Dorsolateral prefrontal cortex (tissue), 120 donors: ENCODE measurements at regions of chr13 and their contacts with region 1.

Region 1: GRCh38 chr13:24091080-24091479 is 69.4 kb upstream of the SPATA13 start:
- DNase-seq: no peak
- H3K4me3 ChIP-seq: no peak overlapping the region
- H3K27ac ChIP-seq: peak overlapping the region in 2 of 59 donors; percentile 5 to 33
- H3K27me3 ChIP-seq: no peaks in the 10 kb centered on the region
- CTCF ChIP-seq: no peak

Region 2: DNA sequence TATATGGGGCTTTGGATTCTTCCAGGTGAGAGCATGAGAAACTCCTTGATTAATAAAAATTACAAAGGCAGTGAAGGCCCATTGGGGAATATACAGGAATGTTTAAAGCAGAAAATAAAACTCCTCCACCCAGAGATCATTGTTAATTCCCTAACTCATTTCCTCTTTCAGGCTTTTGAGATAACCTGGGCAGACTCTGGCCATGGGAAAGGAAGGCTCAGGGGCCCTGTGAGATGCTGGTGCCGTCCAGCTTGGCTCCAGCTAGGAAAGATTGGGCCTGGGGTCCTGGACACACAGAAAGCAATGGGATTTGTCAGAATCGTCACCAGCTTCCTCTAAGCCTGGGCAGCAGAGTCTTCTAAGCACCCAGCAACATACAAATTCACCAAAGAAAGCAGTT is 32.7 kb after region 1 on chr13:
- intact Hi-C with region 1: loop called in 1 of 2 experiments (anchors 1 kb)
- DNase-seq: no peak
- H3K4me3 ChIP-seq: no peak overlapping the region
- H3K27ac ChIP-seq: no peak overlapping the region
- H3K27me3 ChIP-seq: peaks cover 0 to 7% (median 0%) of the 10 kb centered on the region in 45 donors
- CTCF ChIP-seq: no peak